CD14-positive monocyte (primary cell): ENCODE measurements at regions of chr1 and their contacts with region 1.

Region 1: GRCh38 chr1:8423650-8424538 is 106.0 kb downstream of the SLC45A1 start:
- DNase-seq: peak in 2 of 3 donors; percentile 34 to 37
- H3K4me3 ChIP-seq: peak overlapping the region; percentile 70 to 97 (median 92)
- H3K4me3 Mint-ChIP-seq: peak overlapping the region; percentile 88 to 91
- H3K27ac ChIP-seq: peak overlapping the region; percentile 78 to 88
- H3K27ac Mint-ChIP-seq: peak overlapping the region; percentile 89 to 96 (median 94)
- H3K4me1 ChIP-seq: peaks cover 76 to 89% of the 10 kb centered on the region in 2 donors
- H3K4me1 Mint-ChIP-seq: peaks cover 48% of the 10 kb centered on the region
- H3K27me3 ChIP-seq: no peaks in the 10 kb centered on the region
- H3K27me3 Mint-ChIP-seq: peaks cover 0 to 4% (median 0%) of the 10 kb centered on the region in 3 donors
- CTCF ChIP-seq: no peak

Region 2: GRCh38 chr1:7580923-7581753 is 842.8 kb before region 1 on chr1:
- intact Hi-C with region 1: no loop called
- DNase-seq: no peak
- H3K4me3 ChIP-seq: no peak overlapping the region
- H3K4me3 Mint-ChIP-seq: no peak overlapping the region
- H3K27ac ChIP-seq: no peak overlapping the region
- H3K27ac Mint-ChIP-seq: no peak overlapping the region
- H3K4me1 ChIP-seq: no peaks in the 10 kb centered on the region
- H3K4me1 Mint-ChIP-seq: no peaks in the 10 kb centered on the region
- H3K27me3 ChIP-seq: no peaks in the 10 kb centered on the region
- H3K27me3 Mint-ChIP-seq: peaks cover 0 to 10% (median 5%) of the 10 kb centered on the region in 3 donors
- CTCF ChIP-seq: no peak

Region 3: DNA sequence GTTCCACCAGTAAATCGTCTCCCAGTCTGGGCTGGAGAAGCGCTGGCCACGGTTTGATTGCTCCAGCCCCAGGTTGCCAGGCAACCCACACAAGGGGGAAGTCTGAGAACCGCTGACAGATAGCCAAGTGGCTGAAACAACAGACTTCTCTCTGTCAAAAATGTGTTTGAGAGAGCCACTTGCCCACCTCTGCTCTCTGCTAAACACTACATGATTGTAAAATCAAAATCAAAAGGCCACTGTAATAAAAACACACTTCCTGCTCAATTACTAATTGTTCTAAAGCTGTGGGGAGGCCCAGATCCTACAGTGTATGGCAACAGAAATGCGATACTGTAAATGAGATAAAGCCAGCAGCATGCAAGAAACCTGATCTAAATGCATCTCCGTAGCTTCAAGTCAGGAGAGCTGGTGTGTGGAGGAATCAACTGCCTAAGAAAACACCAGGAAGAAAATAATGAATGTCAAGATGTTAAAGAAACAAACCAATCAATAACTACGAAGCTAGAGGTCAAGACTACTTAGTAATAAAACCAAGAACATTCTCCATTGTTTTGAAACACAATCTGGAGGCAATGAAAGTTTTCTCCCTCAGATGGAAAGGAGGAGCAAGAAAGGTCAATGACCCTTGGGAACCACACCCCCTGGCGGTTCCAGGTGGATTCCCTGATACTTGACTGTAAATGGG is 15.3 kb after region 1 on chr1:
- intact Hi-C with region 1: no loop called
- DNase-seq: peak; percentile 65 to 82 (median 72)
- H3K4me3 ChIP-seq: no peak overlapping the region
- H3K4me3 Mint-ChIP-seq: peak overlapping the region in 1 of 2 donors; percentile 76
- H3K27ac ChIP-seq: peak overlapping the region in 1 of 2 donors; percentile 66
- H3K27ac Mint-ChIP-seq: peak overlapping the region; percentile 47 to 93 (median 83)
- H3K4me1 ChIP-seq: peaks cover 10 to 15% of the 10 kb centered on the region in 2 donors
- H3K4me1 Mint-ChIP-seq: peaks cover 16% of the 10 kb centered on the region
- H3K27me3 ChIP-seq: no peaks in the 10 kb centered on the region
- H3K27me3 Mint-ChIP-seq: no peaks in the 10 kb centered on the region
- CTCF ChIP-seq: no peak

Region 4: GRCh38 chr1:8525558-8526275 is 101.8 kb after region 1 on chr1:
- intact Hi-C with region 1: loop called (anchors 10 kb)
- DNase-seq: peak; percentile 93 to 95 (median 95)
- H3K4me3 ChIP-seq: peak overlapping the region; percentile 50 to 77 (median 51)
- H3K4me3 Mint-ChIP-seq: no peak overlapping the region
- H3K27ac ChIP-seq: peak overlapping the region; percentile 84 to 97
- H3K27ac Mint-ChIP-seq: no peak overlapping the region
- H3K4me1 ChIP-seq: peaks cover 33 to 36% of the 10 kb centered on the region in 2 donors
- H3K4me1 Mint-ChIP-seq: peaks cover 10% of the 10 kb centered on the region
- H3K27me3 ChIP-seq: no peaks in the 10 kb centered on the region
- H3K27me3 Mint-ChIP-seq: peaks cover 0 to 1% (median 0%) of the 10 kb centered on the region in 3 donors
- CTCF ChIP-seq: no peak

Region 5: GRCh38 chr1:8702850-8703810 is 279.2 kb after region 1 on chr1:
- intact Hi-C with region 1: loop called in 1 of 2 experiments (anchors 10 kb)
- DNase-seq: peak; percentile 77 to 80 (median 78)
- H3K4me3 ChIP-seq: peak overlapping the region; percentile 48 to 80 (median 74)
- H3K4me3 Mint-ChIP-seq: peak overlapping the region; percentile 85 to 95
- H3K27ac ChIP-seq: peak overlapping the region in 1 of 2 donors; percentile 55
- H3K27ac Mint-ChIP-seq: peak overlapping the region; percentile 53 to 85 (median 80)
- H3K4me1 ChIP-seq: peaks cover 28 to 33% of the 10 kb centered on the region in 2 donors
- H3K4me1 Mint-ChIP-seq: peaks cover 32% of the 10 kb centered on the region
- H3K27me3 ChIP-seq: peaks cover 2 to 8% of the 10 kb centered on the region in 2 donors
- H3K27me3 Mint-ChIP-seq: peaks cover 12 to 32% (median 21%) of the 10 kb centered on the region in 3 donors
- CTCF ChIP-seq: no peak